ENCODE measurements at regions of chr12 and their contacts with region 1.

Region 1: DNA sequence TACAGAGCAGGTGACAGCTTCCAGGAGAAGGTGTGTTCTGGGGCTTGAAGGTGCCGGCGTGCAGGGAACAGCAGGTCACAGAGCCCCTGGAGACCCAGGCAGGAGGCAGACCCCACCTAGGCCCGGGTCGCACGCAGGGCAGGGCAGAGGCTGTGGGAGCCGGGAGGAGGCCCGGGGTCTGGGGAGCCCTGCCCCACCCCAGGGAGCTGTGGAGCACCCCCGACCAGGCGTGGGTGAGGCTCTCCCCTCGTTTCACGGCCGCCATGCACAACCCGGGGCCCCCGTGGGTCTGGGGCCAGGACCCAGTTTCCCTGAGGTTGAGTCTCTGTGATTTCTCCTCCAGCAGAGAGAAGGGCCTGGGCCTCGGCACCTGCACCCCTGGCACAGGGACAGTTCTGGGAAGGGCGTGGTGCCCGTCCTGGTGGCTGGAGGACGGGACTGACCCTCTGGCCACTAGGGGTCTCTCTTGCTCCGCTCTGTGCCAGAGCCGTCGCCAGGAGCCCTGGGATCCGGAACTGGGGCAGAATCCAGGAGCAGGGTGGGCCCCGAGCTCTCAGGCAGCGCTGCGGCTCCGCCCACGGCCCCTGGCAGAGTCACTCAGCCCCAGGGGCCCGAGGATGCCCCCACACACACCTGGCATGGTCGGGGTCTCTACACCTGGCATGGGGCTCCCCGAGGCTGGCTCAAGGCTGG is 75.2 kb upstream of the FBRSL1 start:
- DNase-seq: peak; percentile 72
- H3K4me3 ChIP-seq: no peak overlapping the region
- H3K27ac ChIP-seq: no peak overlapping the region
- H3K4me1 ChIP-seq: no peaks in the 10 kb centered on the region
- H3K27me3 ChIP-seq: no peaks in the 10 kb centered on the region
- CTCF ChIP-seq: peak; percentile 74 to 97 (median 94)
- POLR2A ChIP-seq: no peak

Region 2: GRCh38 chr12:132268674-132269073 is 146.1 kb before region 1 on chr12:
- intact Hi-C with region 1: no loop called
- DNase-seq: no peak
- H3K4me3 ChIP-seq: no peak overlapping the region
- H3K27ac ChIP-seq: no peak overlapping the region
- H3K4me1 ChIP-seq: no peaks in the 10 kb centered on the region
- H3K27me3 ChIP-seq: peaks cover 2% of the 10 kb centered on the region
- CTCF ChIP-seq: no peak
- POLR2A ChIP-seq: no peak

Region 3: DNA sequence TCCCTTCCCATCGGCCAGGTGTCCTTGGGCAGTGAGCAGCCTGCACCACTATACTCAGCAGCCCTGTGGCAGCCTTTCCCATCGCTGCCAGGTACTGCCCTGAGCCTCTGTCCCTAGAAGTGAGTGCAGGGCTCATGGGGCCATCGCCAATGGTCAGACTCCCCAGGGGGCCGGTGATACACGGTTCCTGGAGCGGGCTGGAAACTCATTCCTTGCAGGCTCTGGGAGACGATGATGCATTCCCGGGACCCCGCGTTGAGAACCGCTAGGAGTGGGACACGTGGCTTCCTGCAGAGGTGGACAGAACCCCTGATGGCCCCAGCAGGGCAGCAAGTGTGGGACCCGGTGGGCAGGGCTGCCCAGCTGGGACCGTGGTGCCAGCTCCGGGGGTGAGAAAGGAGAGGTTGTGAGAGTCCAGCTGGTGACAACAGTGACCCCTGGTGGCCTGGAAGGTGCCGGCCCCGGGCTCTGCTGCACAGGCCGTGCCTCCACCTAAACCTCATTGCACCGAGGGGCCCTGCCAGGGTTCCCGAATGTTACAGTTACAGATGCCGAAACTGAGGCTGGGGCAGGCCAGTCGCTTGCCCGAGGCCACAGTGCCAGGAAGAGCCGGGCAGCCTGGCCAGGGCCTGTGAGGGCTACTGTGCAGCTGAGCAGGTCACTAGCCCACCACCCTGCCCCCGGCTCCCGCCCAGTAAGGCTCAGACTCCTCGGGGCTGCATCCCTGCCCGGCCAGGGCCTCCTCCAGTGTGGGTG is 109.0 kb after region 1 on chr12:
- intact Hi-C with region 1: loop called (anchors 5 kb)
- DNase-seq: peak; percentile 58
- H3K4me3 ChIP-seq: no peak overlapping the region
- H3K27ac ChIP-seq: no peak overlapping the region
- H3K4me1 ChIP-seq: peaks cover 14% of the 10 kb centered on the region
- H3K27me3 ChIP-seq: no peaks in the 10 kb centered on the region
- CTCF ChIP-seq: peak; percentile 60 to 83 (median 68)
- POLR2A ChIP-seq: no peak

Region 4: DNA sequence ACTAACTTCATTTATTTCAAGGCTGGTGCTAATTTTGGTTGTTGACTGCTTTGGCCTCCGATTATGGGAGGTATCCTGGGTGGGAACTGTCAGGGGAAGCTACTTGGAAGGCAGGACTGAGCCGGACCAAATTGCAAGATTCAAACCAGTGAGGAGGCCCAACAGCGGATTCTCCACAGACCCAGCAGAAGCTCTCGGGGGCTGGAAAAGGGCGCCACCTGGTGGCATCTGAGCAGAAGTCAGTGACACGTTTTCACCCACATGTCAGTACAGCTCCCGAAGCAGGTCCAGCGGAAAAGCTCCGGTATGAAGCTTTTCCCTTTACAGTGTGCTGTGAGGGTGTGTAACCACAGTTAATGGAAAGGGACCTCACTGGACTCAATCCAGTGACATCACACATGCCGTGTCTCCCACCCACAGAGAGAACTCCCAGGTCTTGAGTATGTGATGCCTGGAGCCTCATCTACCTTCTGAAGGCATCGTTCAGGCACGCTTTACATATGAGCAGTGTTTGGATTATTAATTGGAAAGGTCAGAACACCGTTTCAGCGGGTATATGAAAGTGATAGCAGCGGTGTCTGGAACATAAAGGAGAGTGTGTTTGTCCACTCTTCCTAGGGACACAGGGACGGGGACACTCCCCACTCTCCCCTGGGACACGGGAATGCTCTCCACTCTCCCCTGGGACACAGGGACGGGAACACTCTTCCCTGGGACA is 200.2 kb after region 1 on chr12:
- intact Hi-C with region 1: loop called (anchors 5 kb)
- DNase-seq: peak; percentile 73
- H3K4me3 ChIP-seq: no peak overlapping the region
- H3K27ac ChIP-seq: no peak overlapping the region
- H3K4me1 ChIP-seq: no peaks in the 10 kb centered on the region
- H3K27me3 ChIP-seq: no peaks in the 10 kb centered on the region
- CTCF ChIP-seq: peak; percentile 56 to 88 (median 80)
- POLR2A ChIP-seq: no peak

Region 5: DNA sequence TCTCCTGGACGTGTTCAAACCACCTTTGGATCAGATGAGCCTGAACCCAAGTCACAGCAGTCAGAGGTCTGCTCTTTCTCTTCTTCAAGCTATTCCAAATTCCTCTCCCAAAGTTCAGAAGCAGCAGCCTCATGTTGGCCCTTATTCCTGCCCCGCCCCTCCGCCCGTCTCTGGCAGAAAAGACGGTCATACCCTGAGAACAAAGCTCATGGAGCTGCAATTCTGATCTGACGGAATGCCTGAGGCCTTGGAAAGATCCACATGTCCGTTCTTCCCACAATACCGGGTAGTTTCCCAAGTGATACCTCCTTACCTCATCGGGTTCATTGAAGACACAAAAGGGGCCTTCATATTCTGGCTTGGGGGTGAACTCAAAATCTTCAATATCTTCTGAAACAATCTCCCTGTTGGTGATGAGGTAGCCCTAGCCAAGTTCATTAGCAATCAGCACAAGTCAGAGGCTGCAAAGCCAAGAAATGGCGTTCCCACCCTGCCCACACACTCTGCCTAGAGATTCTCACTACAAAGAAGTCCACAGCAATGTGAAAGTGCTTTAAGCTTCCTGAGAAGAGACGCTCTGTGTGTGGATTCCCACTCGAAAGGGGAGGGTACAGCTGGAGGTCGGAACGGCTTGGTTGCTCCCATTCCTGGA is 261.1 kb after region 1 on chr12:
- intact Hi-C with region 1: no loop called
- DNase-seq: no peak
- H3K4me3 ChIP-seq: no peak overlapping the region
- H3K27ac ChIP-seq: no peak overlapping the region
- H3K4me1 ChIP-seq: no peaks in the 10 kb centered on the region
- H3K27me3 ChIP-seq: no peaks in the 10 kb centered on the region
- CTCF ChIP-seq: no peak
- POLR2A ChIP-seq: no peak